ENCODE measurements at regions of chr6 and their contacts with region 1.

Region 1: GRCh38 chr6:125790358-125791150 is at the start of gene NCOA7:
- DNase-seq: peak; percentile 92
- ATAC-seq: peak; percentile 95
- H3K4me3 ChIP-seq: peak within 1 kb of the TSS; percentile 92
- H3K27ac ChIP-seq: peak within 1 kb of the TSS; percentile 96
- H3K4me1 ChIP-seq: peaks cover 47% of the 10 kb centered on the region
- H3K27me3 ChIP-seq: no peaks in the 10 kb centered on the region
- CTCF ChIP-seq: no peak
- total RNA-seq, gene NCOA7: 80.8 TPM

Region 2: DNA sequence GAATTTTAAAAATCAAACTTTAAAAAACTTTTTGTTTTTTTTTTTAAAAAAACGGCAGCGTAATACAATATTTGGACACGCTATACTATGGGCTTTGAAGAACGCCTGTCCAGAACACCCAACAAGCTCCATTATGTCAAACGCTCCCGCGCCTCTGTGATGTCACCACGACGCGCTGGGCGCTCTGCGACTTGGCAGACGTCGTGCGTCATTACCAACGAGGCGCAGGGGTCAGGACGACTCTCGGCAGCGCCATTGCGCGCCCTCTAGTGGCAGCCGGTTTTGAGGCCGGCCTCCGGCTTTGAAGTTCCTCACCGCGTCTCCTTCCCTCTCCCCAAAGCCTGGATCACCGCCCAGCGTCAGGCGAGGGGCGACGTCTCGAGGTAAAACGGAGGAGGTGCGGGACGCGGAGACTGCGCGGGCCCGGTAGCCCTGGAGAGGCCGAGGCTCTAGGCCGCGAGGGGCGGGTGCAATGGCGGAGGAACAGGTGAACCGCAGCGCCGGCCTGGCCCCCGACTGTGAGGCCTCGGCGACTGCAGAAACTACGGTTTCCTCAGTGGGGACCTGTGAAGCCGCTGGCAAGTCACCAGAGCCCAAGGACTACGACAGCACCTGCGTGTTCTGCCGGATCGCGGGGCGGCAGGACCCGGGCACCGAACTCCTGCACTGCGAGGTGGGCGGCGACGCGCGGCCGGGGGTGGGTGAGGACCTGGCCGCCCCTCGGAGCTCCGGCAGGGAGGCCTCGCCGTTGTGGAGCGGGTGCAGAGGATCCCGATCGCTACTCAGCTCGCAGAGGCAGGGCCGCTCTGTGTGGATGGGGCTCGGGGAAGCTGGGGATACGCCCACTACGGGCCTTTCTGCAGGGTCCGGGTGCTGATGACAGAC is 166.2 kb after region 1 on chr6 and contains the start of gene HINT3:
- intact Hi-C with region 1: loop called (anchors 10 kb)
- DNase-seq: peak; percentile 99
- ATAC-seq: peak; percentile 94
- H3K4me3 ChIP-seq: peak within 1 kb of the TSS; percentile 87
- H3K27ac ChIP-seq: peak within 1 kb of the TSS; percentile 96
- H3K4me1 ChIP-seq: peaks cover 23% of the 10 kb centered on the region
- H3K27me3 ChIP-seq: no peaks in the 10 kb centered on the region
- CTCF ChIP-seq: peak; percentile 97
- total RNA-seq, gene HINT3: 27.9 TPM

Measured in upper lobe of right lung (tissue), 1 donor.